ENCODE measurements at regions of chr1 and their contacts with region 1.

Region 1: GRCh38 chr1:28518000-28518744 is 12.3 kb downstream of the RCC1 start:
- DNase-seq: peak; percentile 90
- H3K4me3 Mint-ChIP-seq: peak overlapping the region; percentile 86
- H3K27ac Mint-ChIP-seq: peak overlapping the region; percentile 80
- H3K4me1 Mint-ChIP-seq: peaks cover 55% of the 10 kb centered on the region
- H3K27me3 Mint-ChIP-seq: no peaks in the 10 kb centered on the region

Region 2: DNA sequence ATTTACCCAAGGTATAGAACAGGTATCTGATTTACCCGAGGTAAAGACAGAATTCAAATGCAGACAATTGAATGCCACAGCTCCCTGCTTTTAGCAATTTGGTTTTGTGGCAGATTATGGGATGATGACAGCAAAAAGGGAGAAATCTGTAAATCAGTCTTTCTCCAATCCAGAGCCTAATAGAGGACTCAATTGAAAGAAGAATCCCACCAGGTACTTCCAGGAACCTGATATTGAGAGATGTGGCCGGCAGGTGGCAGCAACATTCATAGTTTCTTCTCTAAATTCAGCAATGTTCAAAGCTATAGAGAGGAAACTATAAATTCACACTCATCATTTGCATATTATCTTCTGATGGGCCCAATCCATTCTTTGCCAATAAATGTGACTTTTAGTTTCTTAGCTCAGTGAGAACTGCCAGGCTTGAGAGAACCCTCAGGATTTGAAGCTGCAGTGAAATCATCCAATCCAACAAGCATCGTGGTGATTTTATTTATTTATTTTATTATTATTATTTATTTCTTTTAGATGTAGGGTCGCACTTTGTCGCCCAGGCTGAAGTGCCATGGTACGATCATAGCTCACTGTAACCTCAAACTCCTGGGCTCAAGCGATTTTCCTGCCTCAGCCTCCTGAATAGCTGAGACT is 158.5 kb before region 1 on chr1:
- CTCF ChIA-PET with region 1: no interaction called
- POLR2A ChIA-PET with region 1: no interaction called
- DNase-seq: peak; percentile 79
- H3K4me3 Mint-ChIP-seq: no peak overlapping the region
- H3K27ac Mint-ChIP-seq: no peak overlapping the region
- H3K4me1 Mint-ChIP-seq: peaks cover 7% of the 10 kb centered on the region
- H3K27me3 Mint-ChIP-seq: peaks cover 6% of the 10 kb centered on the region

Region 3: GRCh38 chr1:28456078-28456477 is 62.1 kb before region 1 on chr1:
- CTCF ChIA-PET with region 1: no interaction called
- POLR2A ChIA-PET with region 1: no interaction called
- DNase-seq: no peak
- H3K4me3 Mint-ChIP-seq: no peak overlapping the region
- H3K27ac Mint-ChIP-seq: peak overlapping the region; percentile 60
- H3K4me1 Mint-ChIP-seq: peaks cover 23% of the 10 kb centered on the region
- H3K27me3 Mint-ChIP-seq: no peaks in the 10 kb centered on the region

Region 4: GRCh38 chr1:28552758-28553663 is 34.8 kb after region 1 on chr1 and contains the start of gene TRNAU1AP:
- CTCF ChIA-PET with region 1: interaction called, 4 read pairs
- POLR2A ChIA-PET with region 1: interaction called, 12 read pairs
- DNase-seq: peak; percentile 98
- H3K4me3 Mint-ChIP-seq: peak within 1 kb of the TSS; percentile 92
- H3K27ac Mint-ChIP-seq: peak within 1 kb of the TSS; percentile 91
- H3K4me1 Mint-ChIP-seq: peaks cover 29% of the 10 kb centered on the region
- H3K27me3 Mint-ChIP-seq: no peaks in the 10 kb centered on the region
- total RNA-seq, gene TRNAU1AP: 56.9 to 58.9 TPM

Region 5: GRCh38 chr1:28602536-28603439 is 84.6 kb after region 1 on chr1:
- CTCF ChIA-PET with region 1: interaction called, 12 read pairs
- POLR2A ChIA-PET with region 1: no interaction called
- DNase-seq: peak; percentile 25
- H3K4me3 Mint-ChIP-seq: no peak overlapping the region
- H3K27ac Mint-ChIP-seq: no peak overlapping the region
- H3K4me1 Mint-ChIP-seq: peaks cover 21% of the 10 kb centered on the region
- H3K27me3 Mint-ChIP-seq: no peaks in the 10 kb centered on the region

Measured in activated CD4-positive, alpha-beta memory T cell treated with anti-CD3 and anti-CD28 coated beads, Interleukin-2, amount 10 ng/mL, durations not matched to agents 7 days and 5 days (primary cell).